ENCODE measurements at regions of chr3 and their contacts with region 1.

Region 1: GRCh38 chr3:119676771-119677640 is at the start of gene COX17:
- DNase-seq: peak; percentile 91 to 95 (median 93)
- H3K4me3 ChIP-seq: peak within 1 kb of the TSS; percentile 85
- H3K27ac ChIP-seq: peak within 1 kb of the TSS in 1 of 2 donors; percentile 70
- H3K4me1 ChIP-seq: peaks cover 2% of the 10 kb centered on the region
- H3K27me3 ChIP-seq: no peaks in the 10 kb centered on the region
- CTCF ChIP-seq: peak in 1 of 3 donors; percentile 32
- EP300 ChIP-seq: no peak
- POLR2A ChIP-seq: peak; percentile 61
- total RNA-seq, gene COX17: 12.4 to 30.6 (median 24.0) TPM

Region 2: DNA sequence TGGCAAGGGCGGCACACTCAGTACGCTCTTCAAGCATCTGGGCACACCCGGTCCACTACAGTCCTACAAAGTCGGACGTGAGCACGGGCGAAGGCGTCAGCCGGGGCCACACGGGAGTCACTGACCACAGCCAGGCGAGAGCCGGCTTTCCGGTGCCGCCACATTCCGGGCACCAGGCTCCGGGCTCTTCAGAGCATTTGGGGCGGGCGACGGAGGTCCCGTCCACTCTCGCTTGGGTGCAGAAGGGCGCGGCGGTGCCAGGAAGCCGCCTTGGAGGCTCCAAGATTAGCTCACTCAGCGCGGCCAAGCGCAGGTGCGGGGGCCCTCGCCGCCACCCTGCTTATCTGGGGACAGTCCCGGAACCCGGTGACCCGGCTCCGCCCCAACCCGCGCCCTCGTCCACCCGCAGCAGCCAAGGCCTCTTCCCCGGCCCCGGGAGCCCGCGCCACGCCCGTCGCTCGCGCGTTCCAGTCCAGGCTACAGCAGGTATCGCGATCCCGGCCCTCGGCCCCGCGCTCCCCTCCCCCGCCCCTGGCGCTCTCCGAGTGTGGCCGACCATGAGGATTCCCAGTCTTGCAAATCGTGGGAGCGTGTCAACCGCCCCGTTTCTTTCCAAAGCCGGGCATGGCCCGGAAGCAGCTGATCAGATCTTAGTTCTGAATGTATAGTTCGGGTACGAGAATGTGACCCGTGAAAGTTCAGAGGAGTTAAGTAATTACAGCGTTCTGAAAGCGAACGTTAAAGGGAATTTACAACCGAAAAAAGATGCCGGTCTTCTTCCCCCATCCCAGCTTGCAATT is 97.4 kb before region 1 on chr3 and contains the start of gene ADPRH:
- intact Hi-C with region 1: loop called in 1 of 4 experiments (anchors 10 kb)
- DNase-seq: peak; percentile 71 to 88 (median 76)
- H3K4me3 ChIP-seq: peak within 1 kb of the TSS; percentile 69
- H3K27ac ChIP-seq: peak within 1 kb of the TSS; percentile 55 to 70
- H3K4me1 ChIP-seq: no peaks in the 10 kb centered on the region
- H3K27me3 ChIP-seq: no peaks in the 10 kb centered on the region
- CTCF ChIP-seq: no peak
- EP300 ChIP-seq: no peak
- POLR2A ChIP-seq: no peak
- total RNA-seq, gene ADPRH: 2.1 to 6.8 (median 4.5) TPM

Measured in ovary (tissue), 10 donors.